ENCODE measurements at regions of chr16 and their contacts with region 1.

Region 1: DNA sequence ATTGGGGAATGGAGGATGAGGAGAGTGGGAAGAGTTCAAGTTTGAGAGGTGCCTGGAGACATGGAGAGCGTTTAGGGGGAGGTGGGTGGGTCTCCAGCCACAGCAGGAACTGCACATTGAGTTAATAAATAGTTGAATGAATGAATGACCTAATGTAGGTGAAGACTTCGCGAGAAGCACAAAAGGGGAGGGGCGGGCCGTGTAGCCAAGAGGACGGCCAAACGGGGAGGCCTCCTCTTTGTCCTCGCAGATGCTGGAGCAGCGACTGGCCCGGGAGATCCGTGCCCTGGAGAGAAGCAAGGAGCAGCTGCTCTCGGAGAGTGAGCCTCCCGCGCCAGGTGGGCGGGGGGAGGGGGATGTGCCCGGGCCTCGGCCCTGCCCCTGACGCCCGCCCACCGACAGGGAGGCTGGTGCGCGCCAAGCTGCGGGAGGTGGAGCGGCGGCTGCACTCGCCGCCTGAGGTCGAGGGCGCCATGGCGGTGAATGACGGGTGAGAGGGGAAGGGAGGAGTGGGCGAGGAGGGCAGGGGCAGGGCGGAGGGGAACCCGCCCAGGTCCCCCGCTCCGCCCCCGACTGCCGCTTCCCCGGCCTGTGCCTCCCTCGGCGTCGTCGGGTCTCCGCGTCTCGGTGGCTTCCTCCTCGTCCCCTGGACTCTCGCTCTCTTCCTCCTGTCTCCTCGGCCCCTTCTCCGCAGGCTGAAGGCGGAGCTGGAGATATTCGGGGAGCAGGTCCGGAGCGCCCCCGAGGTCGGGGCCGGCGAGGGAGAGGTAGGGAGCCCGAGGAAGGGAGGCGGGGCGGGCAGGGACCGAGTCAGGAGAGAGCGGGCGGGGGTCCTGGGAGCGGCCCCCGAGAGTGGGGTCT is 12.9 kb downstream of the SYCE1L start:
- DNase-seq: peak; percentile 80 to 89
- H3K4me3 ChIP-seq: peak overlapping the region; percentile 53 to 84 (median 74)
- H3K27ac ChIP-seq: peak overlapping the region; percentile 71; the same call in 1 of the 2 replicates
- H3K4me1 ChIP-seq: peaks cover under 1 to 16% (median 11%) of the 10 kb centered on the region in 4 experiments
- H3K27me3 ChIP-seq: no peaks in the 10 kb centered on the region; a peak in 1 of 7 replicates
- CTCF ChIP-seq: 0 out of 4 replicates have a peak, but pooled peaks of 1 of the 3 experiments have one; percentile 2
- EP300 ChIP-seq: peak; percentile 22 to 25; a peak in 2 of 3 replicates
- POLR2A ChIP-seq: peak in 1 of 2 experiments; percentile 88
- RAD21 ChIP-seq: no peak

Region 2: DNA sequence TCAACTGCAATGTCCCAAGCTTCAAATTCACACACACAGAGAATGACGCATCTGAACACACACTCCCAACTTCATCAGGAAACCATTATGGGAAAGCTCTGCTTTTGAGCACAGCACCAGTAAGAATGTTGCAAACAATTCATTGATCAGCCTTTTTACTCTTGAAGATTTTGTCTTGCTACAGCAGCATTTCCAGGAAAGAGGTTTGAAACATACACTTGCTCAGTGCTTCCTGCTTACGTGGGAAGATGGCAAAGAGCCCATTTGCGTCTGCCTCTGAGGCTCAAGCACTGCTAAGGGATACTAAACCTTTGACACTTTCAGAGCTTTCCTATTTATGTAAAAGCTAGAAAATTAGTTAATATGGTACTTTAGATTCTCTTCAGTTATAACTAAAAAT is 98.3 kb before region 1 on chr16:
- CTCF ChIA-PET with region 1: no interaction called
- POLR2A ChIA-PET with region 1: no interaction called
- DNase-seq: no peak
- H3K4me3 ChIP-seq: no peak overlapping the region
- H3K27ac ChIP-seq: no peak overlapping the region
- H3K4me1 ChIP-seq: no peaks in the 10 kb centered on the region
- H3K27me3 ChIP-seq: no peaks in the 10 kb centered on the region; a peak in 1 of 7 replicates
- CTCF ChIP-seq: no peak
- EP300 ChIP-seq: no peak
- POLR2A ChIP-seq: no peak
- RAD21 ChIP-seq: no peak

Region 3: DNA sequence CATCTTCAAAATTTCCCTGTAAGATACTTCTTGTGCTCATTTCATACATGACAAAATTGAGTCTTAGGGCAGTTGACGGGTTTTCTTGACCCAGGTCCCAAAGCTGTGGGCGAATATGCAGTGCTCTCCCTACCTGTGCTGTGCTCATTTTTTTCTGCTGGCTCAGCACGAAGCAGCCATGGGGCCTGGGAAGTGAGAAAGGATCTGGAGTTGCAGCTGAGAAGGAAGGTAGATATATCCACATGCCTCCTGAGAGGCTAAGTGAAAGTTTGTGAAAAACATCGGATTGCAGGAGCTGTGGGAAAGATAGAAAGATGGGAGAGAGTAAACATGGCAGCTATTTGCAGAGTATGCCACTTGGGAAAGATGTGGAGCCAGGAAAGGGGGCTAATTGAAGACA is 64.0 kb before region 1 on chr16:
- CTCF ChIA-PET with region 1: no interaction called
- POLR2A ChIA-PET with region 1: no interaction called
- DNase-seq: no peak
- H3K4me3 ChIP-seq: no peak overlapping the region
- H3K27ac ChIP-seq: no peak overlapping the region
- H3K4me1 ChIP-seq: no peaks in the 10 kb centered on the region
- H3K27me3 ChIP-seq: no peaks in the 10 kb centered on the region
- CTCF ChIP-seq: no peak
- EP300 ChIP-seq: no peak
- POLR2A ChIP-seq: no peak
- RAD21 ChIP-seq: no peak

Region 4: GRCh38 chr16:77190478-77191258 is 21.4 kb before region 1 on chr16 and contains the start of gene MON1B:
- CTCF ChIA-PET with region 1: no interaction called
- POLR2A ChIA-PET with region 1: interaction called, 15 read pairs
- DNase-seq: peak; percentile 89 to 96
- H3K4me3 ChIP-seq: peak within 1 kb of the TSS; percentile 67 to 97 (median 92)
- H3K27ac ChIP-seq: peak within 1 kb of the TSS; percentile 80
- H3K4me1 ChIP-seq: peaks cover 0 to 7% (median 1%) of the 10 kb centered on the region in 4 experiments; a peak in 2 of 7 replicates
- H3K27me3 ChIP-seq: no peaks in the 10 kb centered on the region
- CTCF ChIP-seq: no peak
- EP300 ChIP-seq: no peak
- POLR2A ChIP-seq: peak; percentile 69 to 84
- RAD21 ChIP-seq: no peak
- total RNA-seq, gene MON1B: 44.2 and 45.9 TPM in 2 replicates

Region 5: DNA sequence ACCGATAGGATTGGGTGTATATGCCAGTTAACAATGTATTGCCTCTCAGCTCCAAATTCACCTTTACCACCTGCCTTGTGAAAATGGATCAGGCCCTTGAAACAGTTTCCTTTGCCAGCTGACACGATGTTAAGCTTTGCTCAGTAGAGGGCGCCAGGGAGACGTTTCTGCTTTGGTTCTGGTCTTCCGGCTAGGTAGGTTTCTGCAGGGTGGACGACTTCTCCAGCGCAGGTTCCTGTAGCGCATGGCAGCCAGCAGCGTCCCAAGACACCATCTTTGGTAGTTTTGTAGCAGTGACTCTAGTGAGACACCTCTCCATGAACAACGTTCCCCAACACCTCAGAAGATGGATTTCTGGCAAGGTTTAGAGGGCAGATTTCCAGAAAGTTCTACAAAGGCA is 11.1 kb after region 1 on chr16:
- CTCF ChIA-PET with region 1: interaction called, 11 read pairs
- POLR2A ChIA-PET with region 1: interaction called, 7 read pairs
- DNase-seq: peak in 1 of 2 experiments; percentile 81
- H3K4me3 ChIP-seq: no peak overlapping the region
- H3K27ac ChIP-seq: no peak overlapping the region
- H3K4me1 ChIP-seq: peaks cover 0 to 5% (median 2%) of the 10 kb centered on the region in 4 experiments; a peak in 1 of 7 replicates
- H3K27me3 ChIP-seq: no peaks in the 10 kb centered on the region
- CTCF ChIP-seq: peak; percentile 68 to 95 (median 74)
- EP300 ChIP-seq: no peak
- POLR2A ChIP-seq: no peak
- RAD21 ChIP-seq: peak; percentile 38 to 51

Region 6: GRCh38 chr16:77236063-77236511 is 24.0 kb after region 1 on chr16:
- CTCF ChIA-PET with region 1: no interaction called
- POLR2A ChIA-PET with region 1: no interaction called
- DNase-seq: peak; percentile 79 to 98
- H3K4me3 ChIP-seq: no peak overlapping the region
- H3K27ac ChIP-seq: no peak overlapping the region
- H3K4me1 ChIP-seq: peaks cover 0 to 11% (median 7%) of the 10 kb centered on the region in 4 experiments; a peak in 4 of 7 replicates
- H3K27me3 ChIP-seq: no peaks in the 10 kb centered on the region; a peak in 1 of 7 replicates
- CTCF ChIP-seq: peak; percentile 99 to 100 (median 100)
- EP300 ChIP-seq: peak in 1 of 2 experiments; percentile 44; a peak in 1 of 3 replicates
- POLR2A ChIP-seq: no peak
- RAD21 ChIP-seq: peak; percentile 100